ENCODE measurements at regions of chr5 and their contacts with region 1.

Region 1: DNA sequence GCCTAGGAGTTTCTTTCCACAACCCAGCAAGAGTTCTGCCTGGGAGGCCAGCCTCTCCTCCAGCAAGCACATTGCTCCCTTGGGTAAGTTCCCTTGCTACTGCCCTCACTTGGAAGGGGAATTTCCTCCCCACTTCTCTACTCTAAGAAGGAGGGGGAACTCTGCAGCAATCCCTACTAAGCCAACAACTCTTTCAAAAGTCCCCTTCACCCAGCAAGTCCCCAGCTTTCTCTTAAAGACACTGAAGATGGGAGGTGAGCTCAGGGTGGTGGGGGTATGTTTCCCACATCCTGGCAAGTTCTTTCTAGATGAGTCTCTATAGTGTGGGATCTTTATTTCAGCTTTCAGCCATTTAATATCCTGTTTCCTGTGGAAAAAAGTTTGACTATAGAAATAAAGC is 49.0 kb downstream of the PDE8B start:
- DNase-seq: peak; percentile 38
- ATAC-seq: peak; percentile 81
- H3K4me3 ChIP-seq: no peak overlapping the region
- H3K27ac ChIP-seq: no peak overlapping the region
- H3K4me1 ChIP-seq: no peaks in the 10 kb centered on the region
- H3K27me3 ChIP-seq: no peaks in the 10 kb centered on the region
- CTCF ChIP-seq: no peak
- EP300 ChIP-seq: no peak
- POLR2A ChIP-seq: no peak
- RAD21 ChIP-seq: no peak

Region 2: DNA sequence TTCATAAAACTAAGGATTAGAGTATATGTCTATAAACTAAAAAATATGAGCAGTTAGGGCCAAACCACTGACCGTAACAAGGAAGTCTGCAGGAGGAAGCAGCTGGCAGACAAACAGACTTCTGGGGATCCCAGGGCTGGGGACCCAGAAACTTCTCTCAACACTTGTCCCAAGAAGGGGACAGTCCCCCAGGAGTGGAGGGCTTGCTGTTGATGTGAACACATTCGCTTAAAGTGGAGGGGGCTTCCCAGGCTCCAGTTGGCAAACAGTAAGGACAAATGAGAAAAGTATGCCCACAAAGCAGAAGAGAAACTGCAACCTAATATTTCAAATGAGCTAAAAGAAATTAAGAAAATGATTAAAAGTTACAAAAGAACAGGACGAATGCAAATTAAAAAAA is 34.7 kb after region 1 on chr5:
- CTCF ChIA-PET with region 1: interaction called, 3 read pairs
- POLR2A ChIA-PET with region 1: interaction called, 3 read pairs
- RAD21 ChIA-PET with region 1: interaction called, 11 read pairs
- SMC1A ChIA-PET with region 1: no interaction called
- in situ Hi-C with region 1: no loop called
- intact Hi-C with region 1: no loop called
- DNase-seq: peak; percentile 21
- ATAC-seq: peak; percentile 83
- H3K4me3 ChIP-seq: no peak overlapping the region
- H3K27ac ChIP-seq: no peak overlapping the region
- H3K4me1 ChIP-seq: 0 out of 2 replicates have a peak, but pooled peaks cover 3% of the 10 kb centered on the region
- H3K27me3 ChIP-seq: no peaks in the 10 kb centered on the region; a peak in 1 of 4 replicates
- CTCF ChIP-seq: no peak
- EP300 ChIP-seq: no peak
- POLR2A ChIP-seq: no peak
- RAD21 ChIP-seq: no peak

Region 3: DNA sequence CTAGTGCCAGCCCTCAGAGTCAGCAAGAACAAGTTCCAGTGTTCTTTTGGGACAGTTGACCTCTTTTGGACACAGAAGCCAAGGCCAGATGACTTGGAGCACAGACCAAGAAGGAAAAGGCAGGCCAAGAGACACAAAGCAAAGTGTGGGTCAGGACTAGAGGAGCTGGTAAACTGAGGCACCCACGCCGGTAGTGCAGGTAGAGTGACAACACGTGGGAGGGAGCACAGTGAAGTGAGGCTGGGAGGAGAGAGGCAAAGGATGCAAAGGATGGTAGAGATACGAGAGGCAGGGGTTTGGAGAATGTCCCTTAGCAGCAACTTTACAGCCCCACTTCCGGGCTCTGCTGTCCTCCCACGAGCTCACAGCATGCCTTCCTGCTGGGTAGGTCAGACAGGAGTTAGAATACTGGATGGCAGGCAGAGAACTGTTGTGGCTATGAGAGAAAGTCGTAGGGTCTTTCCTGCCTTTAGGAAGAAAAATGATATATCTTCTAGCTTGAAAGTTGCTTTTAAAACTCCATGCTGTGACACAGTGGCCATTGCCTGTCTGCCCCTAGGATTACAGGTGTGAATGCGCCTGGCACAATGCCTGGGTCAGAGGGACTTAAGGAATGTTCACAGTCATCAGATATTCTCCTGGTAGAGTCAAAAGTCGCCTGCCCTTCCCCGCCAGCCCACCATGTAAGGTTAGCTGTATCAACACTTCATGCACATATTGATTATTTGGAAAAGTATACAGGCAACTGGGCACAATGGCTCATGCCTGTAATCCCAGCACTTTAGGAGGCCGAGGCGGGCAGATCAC is 48.9 kb after region 1 on chr5:
- CTCF ChIA-PET with region 1: no interaction called
- POLR2A ChIA-PET with region 1: no interaction called
- RAD21 ChIA-PET with region 1: no interaction called
- SMC1A ChIA-PET with region 1: no interaction called
- in situ Hi-C with region 1: no loop called
- intact Hi-C with region 1: no loop called
- DNase-seq: no peak
- ATAC-seq: no peak
- H3K4me3 ChIP-seq: no peak overlapping the region
- H3K27ac ChIP-seq: no peak overlapping the region
- H3K4me1 ChIP-seq: no peaks in the 10 kb centered on the region
- H3K27me3 ChIP-seq: no peaks in the 10 kb centered on the region
- CTCF ChIP-seq: no peak
- EP300 ChIP-seq: no peak
- POLR2A ChIP-seq: no peak
- RAD21 ChIP-seq: no peak

Region 4: GRCh38 chr5:77637170-77637997 is 377.9 kb after region 1 on chr5:
- CTCF ChIA-PET with region 1: no interaction called
- POLR2A ChIA-PET with region 1: interaction called, 10 read pairs
- RAD21 ChIA-PET with region 1: no interaction called
- SMC1A ChIA-PET with region 1: no interaction called
- in situ Hi-C with region 1: no loop called
- intact Hi-C with region 1: no loop called
- DNase-seq: no peak
- ATAC-seq: no peak
- H3K4me3 ChIP-seq: no peak overlapping the region
- H3K27ac ChIP-seq: no peak overlapping the region
- H3K4me1 ChIP-seq: no peaks in the 10 kb centered on the region
- H3K27me3 ChIP-seq: peaks cover 3 to 43% of the 10 kb centered on the region in 2 experiments
- CTCF ChIP-seq: no peak
- EP300 ChIP-seq: no peak
- POLR2A ChIP-seq: no peak
- RAD21 ChIP-seq: no peak